ENCODE measurements at regions of chr9 and their contacts with region 1.

Region 1: DNA sequence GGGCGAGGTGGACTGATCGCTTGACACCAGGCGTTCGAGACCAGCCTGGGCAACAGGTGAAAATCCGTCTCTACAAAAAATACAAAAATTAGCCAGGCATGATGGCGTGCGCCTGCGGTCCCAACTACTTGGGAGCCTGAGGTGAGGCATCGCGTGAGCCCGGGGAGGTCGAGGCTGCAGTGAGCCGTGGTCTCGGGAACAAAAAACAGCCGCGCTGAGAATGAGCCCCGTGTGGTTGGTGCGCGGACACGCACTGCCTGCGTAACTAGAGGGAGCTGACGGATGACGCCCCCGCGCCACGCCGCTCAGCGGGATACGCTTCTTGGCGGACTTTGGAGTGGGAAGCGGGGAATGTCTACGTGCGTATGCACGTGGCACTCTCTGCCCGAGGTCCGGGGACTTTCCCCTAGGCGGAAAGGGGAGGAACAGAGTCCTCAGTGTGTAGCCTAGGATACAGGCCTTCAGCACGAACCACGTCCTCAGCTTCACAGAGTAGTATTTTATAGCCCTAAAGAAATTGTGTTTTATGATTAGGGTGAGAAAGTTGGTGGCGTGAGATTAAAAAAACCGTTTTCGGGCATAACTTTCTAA is at the start of gene RMRP:
- DNase-seq: peak; percentile 100
- ATAC-seq: peak; percentile 86
- H3K4me3 ChIP-seq: peak within 1 kb of the TSS; percentile 78
- H3K27ac ChIP-seq: peak within 1 kb of the TSS; percentile 88
- H3K4me1 ChIP-seq: peaks cover 10% of the 10 kb centered on the region
- H3K27me3 ChIP-seq: no peaks in the 10 kb centered on the region
- CTCF ChIP-seq: peak; percentile 20; the same call in 1 of the 2 replicates
- POLR2A ChIP-seq: no peak; the same call in 1 of the 2 replicates
- RAD21 ChIP-seq: peak; percentile 28; the same call in 1 of the 2 replicates
- total RNA-seq, gene RMRP: 13,690 and 21,707 TPM in 2 replicates

Region 2: GRCh38 chr9:35510745-35511428 is 146.8 kb before region 1 on chr9:
- CTCF ChIA-PET with region 1: no interaction called
- POLR2A ChIA-PET with region 1: no interaction called
- dilution Hi-C with region 1: no loop called
- in situ Hi-C with region 1: loop called (anchors 10 kb)
- intact Hi-C with region 1: no loop called
- DNase-seq: peak; percentile 96
- ATAC-seq: peak; percentile 95
- H3K4me3 ChIP-seq: no peak overlapping the region
- H3K27ac ChIP-seq: peak overlapping the region; percentile 89
- H3K4me1 ChIP-seq: peaks cover 13% of the 10 kb centered on the region; the same call in 1 of the 2 replicates
- H3K27me3 ChIP-seq: no peaks in the 10 kb centered on the region
- CTCF ChIP-seq: peak; percentile 40
- POLR2A ChIP-seq: no peak
- RAD21 ChIP-seq: peak; percentile 35

Region 3: DNA sequence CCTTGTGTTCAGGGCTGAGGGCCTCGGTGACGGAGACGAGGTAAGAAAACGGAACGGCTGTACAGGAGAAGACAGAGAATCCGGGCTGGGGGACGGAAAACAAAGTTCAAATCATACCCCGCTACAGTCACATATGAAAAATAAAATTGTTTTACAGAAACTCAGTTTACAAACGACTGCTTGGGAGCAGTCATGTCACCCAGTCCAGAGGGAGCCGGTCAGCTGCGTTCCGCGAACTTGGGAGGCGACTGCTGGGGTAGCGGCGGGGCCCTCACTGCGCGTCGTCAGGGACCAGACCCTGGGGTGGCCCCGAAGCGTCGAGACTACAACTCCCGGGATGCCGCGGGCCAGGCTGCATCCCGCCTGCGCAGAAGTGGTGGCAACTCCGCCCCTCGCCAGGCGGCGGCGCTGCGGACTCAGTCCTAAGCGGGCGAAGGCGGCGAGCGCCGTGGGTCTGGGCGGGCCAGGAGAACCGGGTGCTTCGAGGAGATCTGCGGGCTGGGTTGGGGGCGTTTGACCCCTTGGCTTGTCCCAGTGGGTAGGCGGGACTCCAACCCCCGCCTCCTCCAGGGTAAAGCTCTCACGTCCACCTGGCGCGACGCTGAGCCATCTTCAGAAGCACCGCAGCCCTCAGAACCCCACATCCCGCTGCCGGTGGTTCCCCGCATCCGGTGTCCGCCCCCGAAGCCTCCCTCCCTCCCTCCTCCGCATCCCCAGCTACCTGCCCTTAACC is 10.9 kb before region 1 on chr9:
- CTCF ChIA-PET with region 1: interaction called, 19 read pairs
- POLR2A ChIA-PET with region 1: no interaction called
- dilution Hi-C with region 1: no loop called
- in situ Hi-C with region 1: no loop called
- intact Hi-C with region 1: no loop called
- DNase-seq: peak; percentile 82
- ATAC-seq: peak; percentile 99
- H3K4me3 ChIP-seq: peak overlapping the region; percentile 54
- H3K27ac ChIP-seq: peak overlapping the region; percentile 61
- H3K4me1 ChIP-seq: peaks cover 8% of the 10 kb centered on the region
- H3K27me3 ChIP-seq: no peaks in the 10 kb centered on the region
- CTCF ChIP-seq: peak; percentile 98
- POLR2A ChIP-seq: peak; percentile 48; the same call in 1 of the 2 replicates
- RAD21 ChIP-seq: peak; percentile 83

Region 4: DNA sequence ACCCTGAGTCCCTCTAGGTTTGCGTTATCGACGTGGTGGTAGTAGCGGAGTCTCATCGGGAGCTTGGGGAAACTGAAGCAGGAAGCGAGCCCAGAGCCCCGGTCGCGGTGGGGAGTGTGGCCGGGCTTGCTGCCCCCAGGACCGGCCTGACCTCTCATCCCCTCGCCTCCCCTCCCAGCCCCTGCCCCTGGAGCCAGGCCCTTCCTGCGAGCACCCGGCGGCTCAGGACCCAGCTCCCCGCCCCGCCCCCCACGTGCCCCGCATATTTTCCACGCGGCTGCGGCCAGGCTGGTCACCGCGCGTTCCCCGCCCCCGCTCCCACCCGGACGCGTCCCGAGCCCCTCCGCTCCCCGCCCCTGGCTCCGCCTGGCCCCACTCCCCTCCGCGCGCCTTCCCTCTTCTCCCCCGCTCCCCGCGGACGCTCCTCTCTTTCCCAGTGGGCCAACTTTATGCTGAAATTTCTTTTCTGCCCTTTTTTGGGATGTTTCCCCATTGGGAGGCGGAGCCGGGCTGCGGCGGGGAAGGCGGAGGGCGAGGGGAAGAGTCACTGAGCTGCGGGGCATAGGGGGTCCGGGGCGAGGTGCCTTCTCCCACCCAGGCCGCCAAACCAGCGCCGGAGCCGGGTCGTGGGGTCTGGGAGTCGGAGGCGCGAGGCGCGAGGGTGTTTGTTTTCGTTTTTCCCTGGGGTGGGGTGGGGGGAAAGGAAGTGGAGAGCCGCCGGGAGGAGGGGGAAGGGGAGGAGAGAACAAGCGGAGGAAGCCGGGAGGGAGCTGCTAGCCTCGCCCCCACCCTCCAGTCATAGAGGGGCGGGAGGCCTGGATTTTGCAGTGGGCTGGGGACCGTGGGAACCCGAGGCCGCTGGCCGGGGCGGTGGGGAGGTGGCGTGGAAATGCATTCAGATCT is 33.0 kb after region 1 on chr9:
- CTCF ChIA-PET with region 1: interaction called, 11 read pairs
- POLR2A ChIA-PET with region 1: interaction called, 14 read pairs
- dilution Hi-C with region 1: no loop called
- in situ Hi-C with region 1: no loop called
- intact Hi-C with region 1: loop called (anchors 5 kb)
- DNase-seq: peak; percentile 75
- ATAC-seq: peak; percentile 55
- H3K4me3 ChIP-seq: peak overlapping the region; percentile 83
- H3K27ac ChIP-seq: peak overlapping the region; percentile 98
- H3K4me1 ChIP-seq: peaks cover 19% of the 10 kb centered on the region
- H3K27me3 ChIP-seq: no peaks in the 10 kb centered on the region
- CTCF ChIP-seq: no peak
- POLR2A ChIP-seq: peak; percentile 35; the same call in 1 of the 2 replicates
- RAD21 ChIP-seq: no peak

Region 5: GRCh38 chr9:35705836-35706430 is 48.3 kb after region 1 on chr9:
- CTCF ChIA-PET with region 1: no interaction called
- POLR2A ChIA-PET with region 1: no interaction called
- dilution Hi-C with region 1: no loop called
- in situ Hi-C with region 1: no loop called
- intact Hi-C with region 1: no loop called
- DNase-seq: no peak
- ATAC-seq: no peak
- H3K4me3 ChIP-seq: no peak overlapping the region
- H3K27ac ChIP-seq: no peak overlapping the region
- H3K4me1 ChIP-seq: no peaks in the 10 kb centered on the region
- H3K27me3 ChIP-seq: no peaks in the 10 kb centered on the region
- CTCF ChIP-seq: no peak
- POLR2A ChIP-seq: no peak
- RAD21 ChIP-seq: no peak

Region 6: DNA sequence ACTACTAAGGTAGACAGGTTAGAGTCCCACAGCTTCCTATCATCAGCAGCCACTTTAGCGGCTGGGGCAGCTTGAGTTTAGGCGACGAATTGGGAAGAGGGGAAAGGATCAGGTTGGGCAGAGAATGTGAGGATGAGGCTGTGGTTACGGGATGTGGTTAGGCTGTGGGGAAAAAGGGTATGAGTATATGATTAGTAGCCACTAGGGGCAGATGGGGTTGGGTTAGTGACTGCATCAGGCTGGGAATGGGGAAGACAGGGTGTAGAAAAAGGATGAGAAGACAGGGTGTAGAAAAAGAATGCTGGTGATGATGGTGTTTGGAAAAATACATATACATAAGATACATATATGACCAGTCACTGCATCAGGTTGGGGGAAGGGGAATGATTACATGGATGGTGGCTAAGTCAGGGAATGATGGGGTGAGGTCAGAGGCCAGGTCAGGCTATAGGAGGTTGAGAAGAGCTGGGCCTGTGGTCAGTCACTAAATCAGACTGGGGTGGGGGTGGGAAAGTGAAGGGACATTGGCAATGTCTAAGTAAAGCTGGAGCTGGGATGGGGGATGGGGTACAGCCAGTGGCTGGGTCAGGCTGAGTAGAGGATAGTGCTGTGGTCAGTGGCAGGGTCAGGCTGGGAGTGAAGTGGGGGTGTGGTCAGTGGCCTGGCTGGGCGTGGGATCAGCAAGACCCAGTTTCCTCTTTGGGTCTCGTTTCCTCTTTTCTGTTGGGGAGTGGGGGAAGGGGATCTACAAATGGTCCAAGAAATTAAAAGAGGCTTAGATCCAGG is 72.3 kb after region 1 on chr9:
- CTCF ChIA-PET with region 1: interaction called, 6 read pairs
- POLR2A ChIA-PET with region 1: interaction called, 7 read pairs
- dilution Hi-C with region 1: no loop called
- in situ Hi-C with region 1: no loop called
- intact Hi-C with region 1: loop called (anchors 1 kb)
- DNase-seq: peak; percentile 91
- ATAC-seq: peak; percentile 21
- H3K4me3 ChIP-seq: peak overlapping the region; percentile 99
- H3K27ac ChIP-seq: peak overlapping the region; percentile 90
- H3K4me1 ChIP-seq: peaks cover 25% of the 10 kb centered on the region
- H3K27me3 ChIP-seq: no peaks in the 10 kb centered on the region
- CTCF ChIP-seq: peak; percentile 68
- POLR2A ChIP-seq: no peak
- RAD21 ChIP-seq: peak; percentile 35; the same call in 1 of the 2 replicates